Testis (tissue), 5 donors: ENCODE measurements at regions of chr1 and their contacts with region 1.

Region 1: GRCh38 chr1:47189844-47190508 is at the start of gene PDZK1IP1:
- DNase-seq: peak; percentile 68
- H3K4me3 ChIP-seq: no peak within 1 kb of the TSS
- H3K27ac ChIP-seq: no peak within 1 kb of the TSS
- H3K4me1 ChIP-seq: no peaks in the 10 kb centered on the region
- H3K27me3 ChIP-seq: no peaks in the 10 kb centered on the region
- CTCF ChIP-seq: no peak
- POLR2A ChIP-seq: no peak
- total RNA-seq, gene PDZK1IP1: 1.5 to 8.6 TPM

Region 2: DNA sequence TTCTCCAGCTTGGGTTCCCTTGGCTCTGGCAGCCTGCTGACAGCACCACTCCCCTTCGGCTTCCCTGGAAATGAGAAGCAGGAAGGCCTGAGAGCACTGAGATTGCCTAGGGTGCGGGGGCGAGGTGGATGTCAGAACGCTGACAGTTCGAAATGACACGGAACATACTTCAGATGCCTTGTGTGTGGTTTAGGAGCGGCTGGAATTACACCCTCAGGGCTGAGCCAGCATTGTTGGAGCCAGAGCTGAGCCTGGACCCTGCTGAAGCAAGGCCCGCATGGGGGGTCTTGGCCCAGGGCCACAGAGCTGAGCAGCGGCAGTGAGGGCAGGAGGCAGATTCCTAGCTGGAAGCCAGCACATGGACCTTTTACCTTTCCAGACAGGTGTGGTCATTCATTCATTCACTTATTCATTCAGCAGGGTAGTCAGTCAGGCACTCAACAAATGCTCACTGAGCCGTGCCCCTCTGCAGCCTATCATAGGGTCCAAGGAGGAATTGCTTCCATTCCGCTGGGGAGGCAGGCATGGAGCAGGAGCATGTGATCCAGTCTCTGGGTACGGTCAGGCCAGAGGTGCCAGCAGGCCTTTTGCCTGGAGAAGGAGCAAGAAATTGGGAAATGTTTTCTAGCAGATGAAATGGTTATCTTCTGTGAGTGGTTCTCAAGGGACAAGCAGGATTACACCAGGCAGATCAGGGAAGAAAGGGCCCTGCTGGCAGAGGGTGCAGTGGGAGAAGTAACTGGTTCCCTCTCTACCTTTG is 219.5 kb after region 1 on chr1:
- intact Hi-C with region 1: loop called (anchors 10 kb)
- DNase-seq: no peak
- H3K4me3 ChIP-seq: no peak overlapping the region
- H3K27ac ChIP-seq: no peak overlapping the region
- H3K4me1 ChIP-seq: no peaks in the 10 kb centered on the region
- H3K27me3 ChIP-seq: no peaks in the 10 kb centered on the region
- CTCF ChIP-seq: no peak
- POLR2A ChIP-seq: no peak

Region 3: GRCh38 chr1:47465605-47466004 is 275.6 kb after region 1 on chr1:
- intact Hi-C with region 1: no loop called
- DNase-seq: no peak
- H3K4me3 ChIP-seq: no peak overlapping the region
- H3K27ac ChIP-seq: no peak overlapping the region
- H3K4me1 ChIP-seq: no peaks in the 10 kb centered on the region
- H3K27me3 ChIP-seq: no peaks in the 10 kb centered on the region
- CTCF ChIP-seq: no peak
- POLR2A ChIP-seq: no peak

Region 4: DNA sequence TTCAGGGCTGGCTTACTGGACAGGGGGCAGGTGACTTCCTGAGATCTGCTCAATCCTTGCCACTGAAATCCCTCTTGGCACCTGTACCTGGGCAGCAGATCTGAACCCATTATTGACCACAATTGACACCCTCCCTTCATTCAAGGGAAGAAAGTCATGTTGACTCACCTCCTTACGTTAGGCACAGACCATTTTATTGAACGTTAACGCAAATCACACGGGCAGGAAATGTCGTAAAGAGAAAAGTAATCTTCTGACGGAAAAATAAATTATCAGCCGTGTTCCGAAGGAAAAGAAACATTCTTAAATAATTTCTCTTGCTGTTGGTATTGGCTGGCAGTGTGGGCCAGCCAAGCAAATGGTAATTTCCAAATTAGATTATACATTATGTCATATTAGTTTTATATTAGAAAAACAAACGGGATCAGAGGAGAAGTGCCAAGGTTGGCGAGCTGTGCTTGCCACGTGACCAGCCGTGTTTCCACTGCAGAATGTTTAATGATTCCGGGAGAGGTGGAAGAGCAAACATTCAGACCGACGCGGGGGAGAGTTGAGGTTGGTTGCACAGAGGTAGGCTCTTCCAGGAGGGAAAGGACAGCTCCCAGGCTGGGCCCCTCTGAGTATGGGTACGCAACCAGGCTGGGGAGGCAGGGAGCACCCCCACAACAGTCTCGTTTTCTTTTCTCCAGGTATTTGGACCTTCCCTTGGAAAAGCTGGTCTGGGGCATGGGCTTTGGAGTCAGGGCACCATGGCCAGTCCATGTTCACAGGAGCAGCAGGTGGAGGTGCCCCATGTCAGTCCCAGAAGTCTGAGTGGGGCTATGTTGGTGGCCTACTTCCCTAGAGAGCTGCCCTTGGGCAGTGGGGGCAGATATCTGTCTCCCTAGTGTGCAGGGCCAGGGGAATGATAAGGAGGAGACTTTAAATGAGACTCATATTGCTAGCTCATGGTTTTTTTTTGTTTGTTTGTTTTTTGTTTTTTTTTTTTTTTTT is 368.9 kb after region 1 on chr1:
- intact Hi-C with region 1: no loop called
- DNase-seq: peak; percentile 63
- H3K4me3 ChIP-seq: no peak overlapping the region
- H3K27ac ChIP-seq: peak overlapping the region; percentile 1 to 29
- H3K4me1 ChIP-seq: peaks cover 45% of the 10 kb centered on the region
- H3K27me3 ChIP-seq: no peaks in the 10 kb centered on the region
- CTCF ChIP-seq: no peak
- POLR2A ChIP-seq: no peak